Activated B cell treated with CpG ODN at 0.5 μM for 24 hours (primary cell): ENCODE measurements at regions of chr6 and their contacts with region 1.

Region 1: DNA sequence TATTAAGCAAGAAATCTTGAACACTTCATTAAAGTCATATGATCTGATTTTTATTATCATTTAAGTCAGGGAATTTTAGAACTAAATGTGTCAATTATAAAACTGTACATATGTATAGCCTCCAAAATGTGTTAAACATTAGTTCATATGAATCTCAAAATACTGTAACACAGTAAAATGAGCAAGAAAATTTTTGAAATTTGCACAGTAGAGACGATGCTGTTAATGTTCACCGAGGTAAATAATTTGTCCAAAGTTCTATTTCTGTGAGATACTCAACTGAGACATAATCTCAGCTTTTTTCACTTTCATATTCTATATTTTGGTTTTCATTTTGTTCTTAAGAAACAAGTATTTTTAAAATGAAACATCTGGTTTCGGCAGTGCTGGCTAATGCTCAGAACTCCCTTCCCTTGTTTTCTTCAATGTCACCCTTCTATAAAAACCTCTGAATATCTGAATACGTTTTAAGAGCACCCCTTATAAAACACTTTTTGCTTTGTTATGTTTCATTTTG is 353.1 kb downstream of the LAMA2 start:
- DNase-seq: no peak
- ATAC-seq: no peak
- H3K4me3 Mint-ChIP-seq: no peak overlapping the region
- H3K27ac Mint-ChIP-seq: peak overlapping the region; percentile 59
- H3K4me1 Mint-ChIP-seq: peaks cover 31% of the 10 kb centered on the region
- H3K27me3 Mint-ChIP-seq: no peaks in the 10 kb centered on the region
- CTCF ChIP-seq: no peak

Region 2: DNA sequence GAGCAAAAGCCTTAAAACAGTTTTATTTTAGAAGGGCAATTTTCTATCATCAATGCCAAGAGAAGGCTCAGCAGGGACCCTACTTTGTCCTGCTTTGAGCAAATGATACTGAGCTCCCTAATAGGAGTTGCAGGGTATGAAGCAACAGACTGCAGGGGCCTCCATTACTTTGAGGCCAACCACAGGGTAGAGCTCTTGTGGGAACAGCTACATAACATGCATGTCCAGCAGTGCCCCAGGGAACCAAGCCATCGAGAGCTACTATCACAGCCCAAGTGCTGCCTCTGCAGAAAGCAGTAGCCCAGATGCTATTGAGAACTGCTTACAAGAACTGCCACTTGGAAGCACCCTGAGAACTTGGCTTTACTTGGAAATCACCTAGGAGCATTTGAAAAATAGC is 131.0 kb before region 1 on chr6:
- CTCF ChIA-PET with region 1: no interaction called
- POLR2A ChIA-PET with region 1: no interaction called
- intact Hi-C with region 1: loop called (anchors 10 kb)
- DNase-seq: no peak
- ATAC-seq: no peak
- H3K4me3 Mint-ChIP-seq: no peak overlapping the region
- H3K27ac Mint-ChIP-seq: no peak overlapping the region
- H3K4me1 Mint-ChIP-seq: peaks cover 16% of the 10 kb centered on the region
- H3K27me3 Mint-ChIP-seq: no peaks in the 10 kb centered on the region
- CTCF ChIP-seq: no peak

Region 3: DNA sequence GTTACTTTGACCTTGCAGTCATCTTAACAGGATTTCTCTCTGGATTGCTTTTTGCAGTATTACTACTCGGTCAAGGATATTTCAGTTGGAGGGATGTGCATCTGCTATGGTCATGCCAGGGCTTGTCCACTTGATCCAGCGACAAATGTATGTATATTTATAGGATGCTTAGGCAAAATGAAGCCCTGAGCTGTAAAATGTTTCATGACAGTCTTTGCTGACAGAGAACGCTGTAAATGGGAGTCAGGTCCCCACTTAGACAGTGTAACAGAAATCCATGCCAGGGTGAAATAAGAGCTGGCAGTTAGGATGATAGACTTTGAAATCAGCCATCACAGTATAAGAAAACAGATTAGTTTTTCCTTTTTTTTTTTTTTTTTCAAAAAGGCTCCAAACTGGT is 89.2 kb before region 1 on chr6:
- CTCF ChIA-PET with region 1: no interaction called
- POLR2A ChIA-PET with region 1: no interaction called
- intact Hi-C with region 1: no loop called
- DNase-seq: no peak
- ATAC-seq: no peak
- H3K4me3 Mint-ChIP-seq: no peak overlapping the region
- H3K27ac Mint-ChIP-seq: no peak overlapping the region
- H3K4me1 Mint-ChIP-seq: no peaks in the 10 kb centered on the region
- H3K27me3 Mint-ChIP-seq: no peaks in the 10 kb centered on the region
- CTCF ChIP-seq: no peak